Activated T-helper 1 cell treated with anti-CD3 and anti-CD28 coated beads, Interleukin-12 subunit alpha, Interleukin-12 subunit beta, Interleukin-2, Interleukin-4 antibody, amounts not matched to agents 30 ng/mL and 10 ng/mL and 1 ng/mL, durations not matched to agents 14 hours and 24 hours and 36 hours (primary cell): ENCODE measurements at regions of chr5 and their contacts with region 1.

Region 1: DNA sequence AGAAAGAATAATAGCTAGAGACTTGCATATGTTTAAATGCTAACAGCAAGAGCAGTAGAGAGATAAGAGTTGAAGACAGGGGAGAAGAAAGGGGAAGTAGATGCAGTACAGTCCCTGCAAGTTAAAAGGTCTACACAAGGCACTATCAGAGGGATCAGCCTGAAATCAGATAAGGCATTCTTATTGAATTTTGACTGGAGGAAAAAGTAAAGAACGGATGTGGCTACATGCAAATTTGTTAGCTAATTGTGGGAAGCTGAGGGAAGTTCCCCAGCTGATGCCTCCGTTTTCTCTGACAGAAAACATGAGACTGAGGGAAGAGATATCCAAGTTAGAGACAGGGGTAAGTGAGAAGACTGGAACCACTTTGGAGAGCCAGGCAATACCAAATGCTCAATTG is 12.9 kb upstream of the RHOBTB3 start:
- DNase-seq: peak; percentile 18
- H3K4me3 Mint-ChIP-seq: no peak overlapping the region
- H3K27ac Mint-ChIP-seq: no peak overlapping the region
- H3K4me1 Mint-ChIP-seq: no peaks in the 10 kb centered on the region
- H3K27me3 Mint-ChIP-seq: peaks cover 28% of the 10 kb centered on the region

Region 2: GRCh38 chr5:95591490-95591901 is 126.7 kb before region 1 on chr5:
- intact Hi-C with region 1: loop called (anchors 1 kb)
- DNase-seq: no peak
- H3K4me3 Mint-ChIP-seq: no peak overlapping the region
- H3K27ac Mint-ChIP-seq: peak overlapping the region; percentile 24
- H3K4me1 Mint-ChIP-seq: peaks cover 23% of the 10 kb centered on the region
- H3K27me3 Mint-ChIP-seq: peaks cover 2% of the 10 kb centered on the region

Region 3: DNA sequence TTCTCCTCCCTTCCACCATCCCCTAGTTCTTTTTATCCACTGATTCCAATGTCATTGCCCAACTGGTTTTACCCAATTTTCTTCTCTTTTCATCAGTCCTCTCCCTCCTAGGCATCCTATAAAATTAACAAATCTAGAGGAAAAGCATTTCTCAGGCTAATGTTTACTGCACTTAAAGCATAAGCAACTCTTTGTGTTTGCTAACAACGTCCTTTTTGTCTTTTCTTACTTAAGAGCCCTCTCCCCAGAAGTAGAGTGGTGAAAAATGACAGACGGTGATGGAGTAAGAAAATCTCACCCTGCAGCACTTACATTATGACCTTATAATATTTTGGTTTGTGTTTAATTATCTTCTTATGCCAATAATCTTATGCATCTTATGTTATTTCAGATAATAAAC is 33.8 kb before region 1 on chr5:
- intact Hi-C with region 1: no loop called
- DNase-seq: no peak
- H3K4me3 Mint-ChIP-seq: no peak overlapping the region
- H3K27ac Mint-ChIP-seq: no peak overlapping the region
- H3K4me1 Mint-ChIP-seq: no peaks in the 10 kb centered on the region
- H3K27me3 Mint-ChIP-seq: peaks cover 45% of the 10 kb centered on the region

Region 4: DNA sequence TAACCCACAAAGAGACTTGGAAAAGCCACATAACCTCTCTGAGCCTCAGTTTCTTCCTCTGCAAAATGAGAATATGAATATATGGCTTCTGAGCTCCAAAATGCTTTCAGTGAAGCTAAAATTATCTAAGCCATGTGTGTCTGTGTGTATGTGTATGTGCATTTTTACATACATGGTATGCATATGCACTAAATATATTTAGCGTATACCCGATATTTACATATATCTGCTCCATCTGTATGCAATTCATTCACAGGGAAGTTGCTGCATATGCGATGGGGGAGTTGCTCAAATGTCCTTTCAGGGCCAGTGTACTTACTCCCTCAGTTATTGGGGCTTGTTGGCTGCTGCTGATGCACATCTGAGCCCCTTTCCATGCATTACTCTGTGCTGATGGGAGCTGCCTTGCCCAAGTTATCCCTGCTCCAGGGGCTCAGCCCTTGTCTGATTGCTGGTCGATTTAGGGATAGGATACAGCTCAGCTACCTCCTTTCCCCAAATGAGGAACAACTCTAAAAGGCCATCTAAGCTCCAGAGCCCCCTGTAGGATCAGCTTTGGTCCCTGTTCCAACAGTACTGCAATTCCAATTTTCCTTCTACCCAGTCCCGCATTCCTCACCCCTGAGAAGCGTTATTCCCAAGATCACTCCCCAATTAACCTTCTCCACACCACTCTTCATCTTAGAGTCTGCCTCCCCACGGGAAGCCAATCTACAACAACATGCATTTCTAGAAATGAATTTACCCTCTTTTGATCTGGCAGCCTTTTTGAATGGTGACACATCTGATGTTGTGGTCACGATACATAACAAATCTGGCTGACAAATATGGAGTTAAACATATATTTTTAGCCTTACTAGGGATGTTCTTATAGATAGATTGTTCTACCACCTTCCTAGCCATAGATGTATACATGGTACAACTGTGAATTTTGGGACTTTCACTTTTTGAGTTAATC is 28.8 kb after region 1 on chr5:
- intact Hi-C with region 1: loop called (anchors 1 kb)
- DNase-seq: no peak
- H3K4me3 Mint-ChIP-seq: no peak overlapping the region
- H3K27ac Mint-ChIP-seq: no peak overlapping the region
- H3K4me1 Mint-ChIP-seq: peaks cover 6% of the 10 kb centered on the region
- H3K27me3 Mint-ChIP-seq: peaks cover 7% of the 10 kb centered on the region

Region 5: GRCh38 chr5:96017951-96018350 is 299.7 kb after region 1 on chr5:
- intact Hi-C with region 1: no loop called
- DNase-seq: no peak
- H3K4me3 Mint-ChIP-seq: no peak overlapping the region
- H3K27ac Mint-ChIP-seq: no peak overlapping the region
- H3K4me1 Mint-ChIP-seq: peaks cover 8% of the 10 kb centered on the region
- H3K27me3 Mint-ChIP-seq: no peaks in the 10 kb centered on the region

Region 6: GRCh38 chr5:96067894-96068614 is 349.9 kb after region 1 on chr5:
- intact Hi-C with region 1: loop called (anchors 5 kb)
- DNase-seq: no peak
- H3K4me3 Mint-ChIP-seq: no peak overlapping the region
- H3K27ac Mint-ChIP-seq: peak overlapping the region; percentile 79
- H3K4me1 Mint-ChIP-seq: peaks cover 68% of the 10 kb centered on the region
- H3K27me3 Mint-ChIP-seq: no peaks in the 10 kb centered on the region

Region 7: GRCh38 chr5:96662725-96663513 is 944.7 kb after region 1 on chr5:
- intact Hi-C with region 1: loop called (anchors 5 kb)
- DNase-seq: peak; percentile 82
- H3K4me3 Mint-ChIP-seq: peak overlapping the region; percentile 98
- H3K27ac Mint-ChIP-seq: peak overlapping the region; percentile 98
- H3K4me1 Mint-ChIP-seq: peaks cover 67% of the 10 kb centered on the region
- H3K27me3 Mint-ChIP-seq: peaks cover 11% of the 10 kb centered on the region